Right ventricle myocardium superior (tissue), 1 donor: ENCODE measurements at regions of chr10 and their contacts with region 1.

Region 1: DNA sequence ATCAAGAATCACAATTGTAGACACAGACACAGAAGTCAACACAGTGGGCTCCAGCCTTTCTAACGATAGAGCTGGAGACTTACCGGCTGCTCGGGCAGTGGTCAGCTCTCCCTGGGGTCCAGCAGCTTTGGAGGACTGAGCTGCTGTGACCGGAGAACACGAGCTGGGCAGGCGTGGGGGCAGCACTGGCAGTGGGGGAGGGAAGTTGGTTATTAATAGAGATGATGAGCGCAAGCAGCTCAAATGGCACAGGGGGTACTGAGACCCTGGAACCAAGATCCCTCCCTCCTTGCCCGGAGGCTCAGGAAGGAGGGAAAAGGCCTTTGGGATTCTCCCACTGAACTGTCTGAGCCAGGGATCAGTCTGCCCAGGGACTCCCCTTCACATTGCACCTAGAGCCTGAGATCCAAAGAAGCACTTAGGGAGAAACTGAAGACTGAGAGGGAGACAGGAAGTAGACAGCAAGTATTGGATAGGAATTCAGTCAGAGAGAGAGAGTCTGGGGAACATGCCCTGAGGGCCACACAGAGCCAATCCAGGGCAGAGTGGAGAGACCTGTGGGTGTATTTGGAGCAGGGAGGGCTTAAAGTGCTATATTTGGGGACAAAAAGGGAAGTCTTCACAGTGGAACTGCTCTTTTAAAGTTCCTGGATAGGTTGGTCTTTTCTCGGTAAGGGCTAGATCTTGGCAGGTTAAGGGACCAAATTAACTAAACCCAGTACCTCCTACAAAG is at the start of gene MYOZ1:
- DNase-seq: no peak
- ATAC-seq: no peak
- total RNA-seq, gene MYOZ1: 0.38 TPM

Region 2: DNA sequence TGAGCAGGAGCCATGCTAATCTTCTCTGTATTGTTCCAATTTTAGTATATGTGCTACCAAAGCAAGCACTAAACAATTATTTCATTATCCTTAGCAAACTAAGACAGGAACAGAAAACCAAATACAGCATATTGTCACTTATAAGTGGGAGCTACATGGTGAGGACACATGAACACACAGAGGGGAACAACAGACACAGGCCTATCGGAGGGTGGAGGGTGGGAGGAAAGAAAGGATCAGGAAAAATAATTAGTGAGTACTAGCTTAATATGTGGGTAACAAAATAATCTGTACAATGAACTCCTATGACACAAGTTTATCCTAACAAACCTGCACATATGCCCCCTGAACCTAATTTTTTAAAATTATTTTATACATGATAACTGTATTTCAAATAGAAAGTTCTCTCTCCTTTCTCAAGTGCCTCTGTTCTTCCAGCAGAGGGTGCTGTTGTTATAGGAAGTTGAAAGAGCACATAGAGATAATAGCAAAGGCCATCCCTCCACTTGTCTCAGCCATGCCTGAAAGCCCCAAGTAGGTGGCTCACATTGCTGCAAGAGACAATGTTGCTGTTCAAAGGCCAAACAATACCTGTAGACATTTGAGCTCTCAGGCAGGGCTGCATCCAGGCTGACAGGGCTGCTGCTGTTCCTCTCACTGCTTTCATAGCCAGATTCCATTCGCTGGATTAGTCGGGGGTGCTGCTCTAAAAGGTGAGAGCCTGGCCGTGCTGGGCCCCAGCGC is 112.2 kb before region 1 on chr10:
- intact Hi-C with region 1: loop called (anchors 2 kb)
- DNase-seq: no peak
- ATAC-seq: peak; percentile 93